Mammary epithelial cell (primary cell): ENCODE measurements at regions of chr2 and their contacts with region 1.

Region 1: DNA sequence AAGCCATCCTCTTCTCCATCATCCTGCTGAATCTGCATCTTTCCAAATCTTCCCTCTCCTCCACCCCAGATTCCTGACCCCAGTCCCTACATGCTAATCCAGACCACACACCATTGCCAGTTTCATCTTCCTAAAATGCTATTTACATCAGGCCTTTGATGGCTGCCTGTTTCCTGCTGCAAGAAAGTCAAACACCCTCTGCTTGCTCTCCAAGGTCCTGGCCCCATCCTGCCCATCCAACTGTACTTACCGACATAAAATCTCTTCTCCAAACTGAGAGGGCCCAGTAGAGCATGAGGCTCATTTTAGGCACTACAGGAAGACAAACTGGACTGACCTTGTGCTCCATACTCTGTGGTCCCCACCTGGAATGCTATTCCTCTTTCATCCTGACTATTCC is 19.0 kb downstream of the ALK start:
- DNase-seq: no peak
- H3K4me3 ChIP-seq: no peak overlapping the region
- H3K27ac ChIP-seq: no peak overlapping the region
- H3K4me1 ChIP-seq: no peaks in the 10 kb centered on the region
- H3K27me3 ChIP-seq: peaks cover 20% of the 10 kb centered on the region
- CTCF ChIP-seq: no peak

Region 2: DNA sequence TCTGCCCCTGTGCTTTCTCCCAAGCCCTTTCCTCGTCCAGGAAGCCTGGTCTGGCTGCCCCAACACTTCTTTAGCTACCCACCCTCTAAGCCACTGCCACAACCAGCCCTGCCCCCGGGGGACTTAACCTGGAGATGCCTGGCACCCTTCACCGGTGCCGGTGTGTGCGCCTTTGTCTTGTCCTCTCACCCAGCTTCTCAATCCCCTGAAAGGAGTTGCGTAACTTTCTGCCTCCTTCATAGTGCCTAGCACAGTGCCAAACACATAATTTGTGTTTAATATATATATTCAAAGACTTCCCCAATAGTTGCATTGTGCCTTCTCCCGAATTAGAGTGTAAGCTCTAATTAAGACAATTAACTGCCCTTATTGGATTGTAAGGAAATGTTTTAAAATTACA is 51.6 kb before region 1 on chr2:
- CTCF ChIA-PET with region 1: no interaction called
- dilution Hi-C with region 1: loop called (anchors 5 kb)
- in situ Hi-C with region 1: no loop called
- intact Hi-C with region 1: no loop called
- DNase-seq: no peak
- H3K4me3 ChIP-seq: no peak overlapping the region
- H3K27ac ChIP-seq: no peak overlapping the region
- H3K4me1 ChIP-seq: no peaks in the 10 kb centered on the region
- H3K27me3 ChIP-seq: peaks cover 7% of the 10 kb centered on the region
- CTCF ChIP-seq: no peak